ENCODE measurements at regions of chr15 and their contacts with region 1.

Region 1: DNA sequence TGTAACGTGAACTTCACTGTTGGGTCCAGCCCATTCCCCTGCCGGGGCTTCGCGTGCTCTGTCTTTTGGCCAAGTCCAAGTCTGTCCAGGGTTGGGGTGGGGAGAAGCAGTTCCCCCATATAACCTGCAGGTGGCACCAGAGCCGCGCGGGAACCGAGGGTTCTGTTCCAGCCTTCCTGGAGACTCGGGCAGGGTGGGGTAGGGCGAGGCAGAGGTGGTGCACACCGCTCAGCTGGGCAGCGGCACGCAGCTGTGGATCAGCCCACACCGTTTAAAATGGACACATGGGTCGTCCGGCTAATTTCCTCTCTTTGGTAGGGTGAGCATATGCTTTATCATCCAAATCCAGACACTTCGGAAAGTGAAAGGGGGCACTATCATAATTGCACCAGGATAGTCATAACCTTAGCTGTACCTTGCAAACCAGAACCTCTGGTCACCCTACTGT is 118.1 kb downstream of the TBC1D2B start:
- DNase-seq: peak; percentile 63
- ATAC-seq: peak; percentile 100
- H3K4me3 ChIP-seq: peak overlapping the region; percentile 33 to 36
- H3K27ac ChIP-seq: no peak overlapping the region
- H3K4me1 ChIP-seq: peaks cover 0 to 11% of the 10 kb centered on the region in 2 experiments; a peak in 2 of 4 replicates
- H3K27me3 ChIP-seq: no peaks in the 10 kb centered on the region
- CTCF ChIP-seq: peak; percentile 92 to 94 (median 93)
- POLR2A ChIP-seq: no peak
- RAD21 ChIP-seq: peak; percentile 95

Region 2: GRCh38 chr15:77944002-77944867 is 15.2 kb before region 1 on chr15:
- CTCF ChIA-PET with region 1: no interaction called
- POLR2A ChIA-PET with region 1: no interaction called
- RAD21 ChIA-PET with region 1: no interaction called
- intact Hi-C with region 1: no loop called
- DNase-seq: peak; percentile 13
- ATAC-seq: no peak
- H3K4me3 ChIP-seq: no peak overlapping the region
- H3K27ac ChIP-seq: no peak overlapping the region
- H3K4me1 ChIP-seq: no peaks in the 10 kb centered on the region
- H3K27me3 ChIP-seq: no peaks in the 10 kb centered on the region
- CTCF ChIP-seq: no peak
- POLR2A ChIP-seq: no peak
- RAD21 ChIP-seq: no peak

Region 3: DNA sequence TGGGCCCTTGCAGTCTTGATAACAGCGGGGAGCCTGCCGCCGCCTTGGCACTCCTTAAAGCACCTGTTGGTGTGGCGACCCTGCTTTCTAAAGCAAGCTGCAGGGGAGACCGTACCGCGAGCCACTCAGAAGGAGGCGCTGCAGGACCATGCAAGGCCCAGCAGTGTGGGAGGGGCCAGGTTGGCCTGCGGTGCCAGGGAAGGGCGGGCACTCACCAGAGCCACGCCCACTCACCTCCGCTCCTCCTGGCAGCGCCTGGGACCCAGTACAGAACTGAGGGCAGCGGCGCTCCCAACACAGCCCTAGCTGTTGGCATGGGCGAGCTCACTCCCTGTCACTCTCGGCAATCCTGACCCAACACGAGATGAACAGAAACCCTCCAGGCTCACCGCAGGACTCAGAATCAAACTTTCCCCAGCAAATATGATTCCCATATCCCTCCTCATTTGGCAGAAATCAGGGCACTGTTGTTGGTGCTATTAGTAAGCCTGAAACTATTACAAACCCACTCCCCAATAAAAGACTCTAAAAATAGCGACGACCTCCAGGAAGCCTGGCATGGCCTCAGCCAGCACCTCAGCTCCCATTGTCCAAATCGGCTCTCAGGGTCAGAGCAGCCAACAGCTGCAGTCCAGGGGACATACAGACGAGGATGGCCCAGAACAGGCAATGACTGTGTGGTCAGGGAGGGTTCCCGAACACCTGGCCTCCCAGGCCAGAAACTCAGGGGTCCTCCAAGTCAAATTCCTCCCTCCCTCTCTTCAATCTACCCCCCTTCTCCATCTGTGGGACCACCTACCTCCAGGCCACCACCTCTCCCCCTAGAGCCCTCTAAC is 40.9 kb after region 1 on chr15:
- CTCF ChIA-PET with region 1: interaction called, 12 read pairs
- POLR2A ChIA-PET with region 1: no interaction called
- RAD21 ChIA-PET with region 1: interaction called in 1 of 2 experiments, 3 read pairs
- intact Hi-C with region 1: loop called (anchors 2 kb)
- DNase-seq: peak; percentile 81
- ATAC-seq: peak; percentile 100
- H3K4me3 ChIP-seq: no peak overlapping the region
- H3K27ac ChIP-seq: no peak overlapping the region
- H3K4me1 ChIP-seq: peaks cover 0 to 5% of the 10 kb centered on the region in 2 experiments; a peak in 1 of 4 replicates
- H3K27me3 ChIP-seq: no peaks in the 10 kb centered on the region
- CTCF ChIP-seq: peak; percentile 84 to 94 (median 85)
- POLR2A ChIP-seq: no peak
- RAD21 ChIP-seq: peak; percentile 97

Measured in HCT116 (cell line).